Mammary epithelial cell (primary cell): ENCODE measurements at regions of chr2 and their contacts with region 1.

Region 1: DNA sequence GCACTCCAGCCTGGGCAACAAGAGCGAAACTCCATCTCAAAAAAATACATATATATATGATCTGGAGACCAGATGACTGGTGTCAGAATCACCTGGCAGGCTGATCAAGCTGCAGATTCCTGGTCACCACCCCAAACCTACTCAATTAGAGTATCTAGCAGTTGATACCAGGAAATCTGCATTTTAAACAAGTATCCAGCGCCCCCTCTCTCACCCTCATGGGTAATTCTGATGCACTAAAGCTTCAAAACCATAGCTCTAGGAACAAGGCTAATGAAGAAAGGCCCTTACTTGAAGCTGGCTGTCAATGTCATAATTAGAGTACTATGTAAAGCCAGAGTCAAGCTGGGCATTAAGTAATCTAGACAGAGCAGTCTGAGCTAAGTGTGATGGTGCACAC is 25.0 kb upstream of the PCBP1 start:
- DNase-seq: no peak
- H3K4me3 ChIP-seq: no peak overlapping the region
- H3K27ac ChIP-seq: no peak overlapping the region
- H3K4me1 ChIP-seq: no peaks in the 10 kb centered on the region
- H3K27me3 ChIP-seq: no peaks in the 10 kb centered on the region
- CTCF ChIP-seq: no peak

Region 2: DNA sequence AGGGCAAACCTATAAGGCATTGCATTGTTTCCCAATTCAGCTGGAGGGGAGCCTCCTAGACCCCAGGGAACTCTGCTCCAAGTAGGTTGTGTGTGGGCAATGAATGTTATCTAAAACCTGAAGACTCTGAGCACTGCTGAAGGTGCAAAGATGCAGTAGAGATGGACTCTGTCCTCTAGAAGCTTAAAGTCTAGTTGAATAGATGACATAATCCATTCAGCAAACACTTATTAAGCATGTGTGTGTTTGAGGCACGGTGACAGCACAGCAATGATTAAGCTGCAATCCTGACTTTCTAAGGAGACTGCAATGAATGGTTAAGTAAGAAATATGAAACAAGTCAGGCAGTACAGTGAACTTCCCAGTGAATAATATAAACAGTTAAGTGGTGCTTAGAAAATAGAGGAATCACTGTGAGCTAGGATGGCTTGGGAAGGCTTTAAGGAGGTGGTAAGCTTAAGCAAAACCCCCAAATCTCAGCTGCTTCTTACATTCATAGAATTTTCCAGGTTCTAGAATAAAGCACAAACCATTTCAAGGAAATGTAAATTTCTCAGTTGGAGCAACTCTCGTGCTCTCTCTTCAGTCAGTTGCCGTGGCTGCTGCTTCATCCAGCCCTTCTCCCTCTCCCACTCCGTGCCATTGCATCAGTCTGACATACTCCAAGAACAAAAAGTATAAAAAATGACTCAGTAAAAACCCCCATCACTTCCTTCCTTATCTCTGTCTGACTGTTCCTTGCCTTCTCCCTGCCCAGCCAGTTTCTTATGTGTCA is 128.2 kb before region 1 on chr2:
- CTCF ChIA-PET with region 1: no interaction called
- dilution Hi-C with region 1: loop called (anchors 5 kb)
- in situ Hi-C with region 1: no loop called
- intact Hi-C with region 1: no loop called
- DNase-seq: peak; percentile 86
- H3K4me3 ChIP-seq: no peak overlapping the region
- H3K27ac ChIP-seq: peak overlapping the region; percentile 73
- H3K4me1 ChIP-seq: peaks cover 18% of the 10 kb centered on the region
- H3K27me3 ChIP-seq: no peaks in the 10 kb centered on the region
- CTCF ChIP-seq: no peak

Region 3: DNA sequence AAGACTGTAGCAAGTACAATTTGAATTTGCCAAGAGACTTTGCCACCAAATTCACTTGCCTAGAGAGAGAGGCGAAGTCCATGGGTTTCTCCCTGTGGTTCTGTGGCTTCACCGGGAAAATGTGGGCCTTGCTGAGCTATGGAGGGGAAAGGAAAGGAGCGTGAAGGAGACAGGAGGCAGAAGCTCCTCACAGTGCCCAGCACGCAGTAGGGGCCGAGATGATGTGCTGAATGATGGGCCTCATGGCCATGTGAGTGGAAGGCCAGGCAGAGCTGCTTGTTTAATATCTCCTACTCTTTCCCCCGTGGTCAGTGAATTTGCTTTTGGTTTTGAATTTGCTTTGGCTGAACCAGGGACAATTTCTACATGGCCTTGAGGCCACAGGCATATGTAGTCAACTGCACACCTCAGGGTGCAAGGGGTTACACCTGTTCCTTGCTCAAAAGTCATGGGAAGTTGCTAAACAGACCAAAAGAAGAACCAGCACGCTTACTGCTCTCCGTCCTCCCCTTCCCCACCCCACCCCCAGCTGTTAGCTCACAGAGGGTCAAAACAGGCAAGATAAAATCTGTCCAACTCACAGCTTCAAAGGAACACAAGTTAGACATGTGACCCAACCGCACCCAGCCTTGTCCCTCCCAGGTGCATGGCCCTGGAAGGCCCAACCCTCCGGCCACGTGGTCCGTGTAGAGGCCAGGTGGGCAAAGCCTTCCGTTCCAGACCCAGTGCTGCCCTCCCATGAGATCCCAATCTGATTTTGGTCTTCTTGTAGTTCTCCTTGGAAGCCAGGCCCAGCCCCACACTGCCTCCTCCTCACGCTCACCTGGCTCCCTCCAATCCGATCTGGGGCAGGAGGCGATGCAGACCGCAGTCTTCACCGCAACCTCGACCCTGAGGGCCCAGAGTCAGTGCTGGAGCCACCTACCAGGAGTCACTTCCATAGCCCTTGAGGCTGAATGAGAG is 86.5 kb before region 1 on chr2:
- CTCF ChIA-PET with region 1: no interaction called
- dilution Hi-C with region 1: loop called (anchors 5 kb)
- in situ Hi-C with region 1: no loop called
- intact Hi-C with region 1: no loop called
- DNase-seq: no peak
- H3K4me3 ChIP-seq: no peak overlapping the region
- H3K27ac ChIP-seq: no peak overlapping the region
- H3K4me1 ChIP-seq: no peaks in the 10 kb centered on the region
- H3K27me3 ChIP-seq: no peaks in the 10 kb centered on the region
- CTCF ChIP-seq: no peak

Region 4: GRCh38 chr2:70014959-70015358 is 47.3 kb before region 1 on chr2:
- CTCF ChIA-PET with region 1: no interaction called
- dilution Hi-C with region 1: loop called (anchors 5 kb)
- in situ Hi-C with region 1: no loop called
- intact Hi-C with region 1: no loop called
- DNase-seq: no peak
- H3K4me3 ChIP-seq: no peak overlapping the region
- H3K27ac ChIP-seq: no peak overlapping the region
- H3K4me1 ChIP-seq: no peaks in the 10 kb centered on the region
- H3K27me3 ChIP-seq: no peaks in the 10 kb centered on the region
- CTCF ChIP-seq: no peak